ENCODE measurements at regions of chr17 and their contacts with region 1.

Region 1: GRCh38 chr17:73182616-73183310 is 10.1 kb upstream of the COG1 start:
- DNase-seq: no peak

Region 2: GRCh38 chr17:72985881-72986720 is 196.7 kb before region 1 on chr17:
- in situ Hi-C with region 1: loop called (anchors 5 kb)
- DNase-seq: peak; percentile 96

Region 3: GRCh38 chr17:73379826-73380225 is 197.1 kb after region 1 on chr17:
- in situ Hi-C with region 1: no loop called
- DNase-seq: no peak

Measured in SK-MEL-5 (cell line).